ENCODE measurements at regions of chr1 and their contacts with region 1.

Region 1: DNA sequence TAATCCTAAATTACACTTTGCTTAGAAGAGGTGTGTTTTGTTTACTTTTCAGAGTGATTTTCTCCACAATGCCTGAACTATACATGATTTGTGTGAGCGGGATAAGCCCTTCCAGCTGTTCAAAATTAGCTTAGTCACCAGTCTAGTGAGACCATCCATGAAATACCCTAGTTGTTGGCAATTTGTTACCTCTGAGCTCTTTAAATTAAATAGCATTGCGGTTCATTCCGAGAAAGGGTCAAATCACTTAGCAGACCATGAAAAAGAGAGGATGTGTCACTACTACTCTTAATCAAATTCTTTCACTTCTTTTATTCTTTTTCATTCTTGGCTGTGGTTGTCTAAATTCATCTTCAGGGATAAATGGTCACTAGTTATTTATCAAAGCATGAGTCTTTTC is 11.9 kb upstream of the VAV3 start:
- DNase-seq: no peak
- ATAC-seq: no peak
- H3K4me3 Mint-ChIP-seq: no peak overlapping the region
- H3K27ac Mint-ChIP-seq: no peak overlapping the region
- H3K4me1 Mint-ChIP-seq: peaks cover 22% of the 10 kb centered on the region
- H3K27me3 Mint-ChIP-seq: no peaks in the 10 kb centered on the region
- CTCF ChIP-seq: no peak

Region 2: DNA sequence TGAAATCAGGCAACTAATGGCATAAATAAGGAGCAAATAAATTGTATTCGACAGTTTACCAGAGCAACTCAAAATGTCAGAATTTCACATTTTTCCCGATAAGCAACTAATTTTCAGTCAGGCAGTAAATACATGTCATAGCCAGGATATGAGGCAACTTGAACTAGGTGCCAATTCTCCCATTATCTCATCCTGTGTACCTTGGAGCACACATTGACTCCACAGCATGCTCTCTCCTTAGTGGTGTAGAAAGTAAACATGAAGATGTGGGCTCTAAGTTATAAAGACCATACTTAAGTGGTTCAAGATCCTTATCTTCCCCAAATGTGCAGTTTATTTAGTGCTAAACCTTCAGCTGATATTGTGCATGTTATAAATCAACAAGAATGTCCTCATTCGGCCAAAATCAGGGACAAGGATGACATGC is 209.7 kb before region 1 on chr1:
- CTCF ChIA-PET with region 1: no interaction called
- POLR2A ChIA-PET with region 1: no interaction called
- intact Hi-C with region 1: no loop called
- DNase-seq: no peak
- ATAC-seq: no peak
- H3K4me3 Mint-ChIP-seq: no peak overlapping the region
- H3K27ac Mint-ChIP-seq: no peak overlapping the region
- H3K4me1 Mint-ChIP-seq: no peaks in the 10 kb centered on the region
- H3K27me3 Mint-ChIP-seq: no peaks in the 10 kb centered on the region
- CTCF ChIP-seq: no peak

Region 3: DNA sequence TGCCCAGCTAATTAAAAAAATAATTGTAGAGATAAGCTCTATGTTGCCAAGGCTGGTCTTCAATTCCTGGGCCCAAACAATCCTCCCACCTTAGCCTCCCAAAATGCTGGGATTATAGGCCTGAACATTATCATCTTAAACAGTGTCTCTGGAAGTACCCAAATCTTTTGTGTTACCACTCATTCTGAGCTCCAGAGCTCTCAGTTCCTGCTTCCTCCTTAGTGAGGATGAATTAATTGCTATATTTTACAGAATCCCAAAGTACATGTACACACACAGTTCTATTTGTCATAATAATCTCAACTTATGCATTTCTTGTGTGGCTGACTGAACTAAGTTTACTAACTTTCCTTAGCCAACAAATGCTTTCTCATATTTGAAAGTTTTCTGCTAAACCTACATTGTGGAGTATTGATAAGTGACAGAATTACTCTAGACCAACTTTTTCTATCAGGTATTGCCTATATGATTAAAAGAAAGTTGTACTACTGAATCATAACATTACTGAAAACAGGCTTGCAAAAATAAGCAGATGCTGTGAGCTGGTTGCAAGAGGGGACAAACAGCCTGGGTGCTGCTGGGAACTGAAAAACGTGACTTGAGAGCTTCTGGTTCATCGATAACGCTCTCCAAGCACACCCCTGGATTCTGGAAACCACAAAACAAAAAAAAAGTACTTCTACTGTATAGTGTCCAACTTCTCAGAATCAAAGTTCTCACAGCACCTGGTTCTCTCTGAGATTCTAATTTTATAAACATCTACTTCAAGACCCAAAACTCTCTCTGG is 27.2 kb before region 1 on chr1:
- CTCF ChIA-PET with region 1: no interaction called
- POLR2A ChIA-PET with region 1: no interaction called
- intact Hi-C with region 1: no loop called
- DNase-seq: no peak
- ATAC-seq: peak; percentile 50
- H3K4me3 Mint-ChIP-seq: peak overlapping the region; percentile 19
- H3K27ac Mint-ChIP-seq: peak overlapping the region; percentile 11
- H3K4me1 Mint-ChIP-seq: peaks cover 75% of the 10 kb centered on the region
- H3K27me3 Mint-ChIP-seq: no peaks in the 10 kb centered on the region
- CTCF ChIP-seq: no peak

Region 4: DNA sequence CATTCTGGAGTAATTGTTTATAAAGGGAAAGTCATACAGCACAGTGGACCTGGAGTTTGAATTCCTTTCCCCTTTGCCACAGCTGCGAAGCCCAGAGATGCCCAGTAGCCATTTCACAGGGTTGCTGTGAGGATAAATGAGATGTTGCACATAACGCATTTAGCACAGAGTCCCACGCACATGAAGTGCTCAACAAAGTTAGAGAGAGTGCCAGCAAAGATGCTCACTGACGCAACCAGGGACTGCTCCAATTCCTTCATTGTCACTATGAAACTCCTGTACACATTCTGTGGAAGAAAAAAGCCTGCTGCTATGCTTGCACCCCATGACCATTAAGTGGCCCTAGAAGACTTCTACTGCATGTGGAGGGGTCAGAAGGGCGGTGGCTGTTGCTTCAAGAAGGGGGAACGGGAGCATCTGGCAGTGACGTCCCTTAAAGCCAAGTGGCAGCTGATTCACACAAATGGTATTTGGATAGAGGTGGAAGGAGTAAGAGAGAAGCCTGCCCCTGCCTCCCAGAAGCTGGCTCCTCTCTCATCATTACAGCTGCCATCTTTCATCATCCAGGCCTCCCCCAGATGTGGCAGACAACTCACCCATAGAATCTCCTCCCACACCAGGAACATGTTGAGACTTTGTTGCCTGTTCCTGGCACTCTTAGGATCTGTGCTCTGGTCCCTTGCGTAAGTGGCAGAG is 14.7 kb after region 1 on chr1:
- CTCF ChIA-PET with region 1: no interaction called
- POLR2A ChIA-PET with region 1: no interaction called
- intact Hi-C with region 1: loop called (anchors 2 kb)
- DNase-seq: no peak
- ATAC-seq: no peak
- H3K4me3 Mint-ChIP-seq: no peak overlapping the region
- H3K27ac Mint-ChIP-seq: no peak overlapping the region
- H3K4me1 Mint-ChIP-seq: no peaks in the 10 kb centered on the region
- H3K27me3 Mint-ChIP-seq: no peaks in the 10 kb centered on the region
- CTCF ChIP-seq: no peak

Region 5: DNA sequence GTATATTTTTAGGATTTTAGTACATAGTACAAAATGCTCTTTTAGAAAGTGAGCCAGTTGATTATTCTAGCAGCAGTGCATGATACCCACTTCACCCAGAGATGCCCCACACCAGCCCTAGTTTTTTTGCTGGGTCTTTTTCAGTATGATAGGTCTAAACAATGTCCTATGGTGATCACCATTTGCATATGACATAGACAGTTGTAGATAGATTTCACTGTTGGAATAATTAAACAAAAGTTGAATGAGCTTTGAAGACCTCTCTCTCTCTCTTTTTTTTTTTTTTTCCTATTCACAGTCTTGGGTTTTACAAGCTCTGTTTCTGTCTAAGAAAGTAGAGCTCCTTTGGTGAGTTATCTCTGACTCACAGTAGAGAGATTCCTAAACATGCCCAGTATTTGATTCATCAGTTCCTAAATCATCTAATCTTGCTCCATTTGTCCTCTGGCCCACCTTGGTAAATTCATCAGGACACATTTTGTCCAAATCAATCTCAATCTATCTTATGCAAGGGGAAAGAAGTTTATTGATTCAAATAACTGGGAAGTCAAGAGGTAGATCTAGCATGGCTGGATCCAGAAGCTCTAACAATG is 32.9 kb after region 1 on chr1:
- CTCF ChIA-PET with region 1: no interaction called
- POLR2A ChIA-PET with region 1: no interaction called
- intact Hi-C with region 1: loop called (anchors 5 kb)
- DNase-seq: no peak
- ATAC-seq: no peak
- H3K4me3 Mint-ChIP-seq: no peak overlapping the region
- H3K27ac Mint-ChIP-seq: no peak overlapping the region
- H3K4me1 Mint-ChIP-seq: peaks cover 39% of the 10 kb centered on the region
- H3K27me3 Mint-ChIP-seq: no peaks in the 10 kb centered on the region
- CTCF ChIP-seq: no peak

Region 6: GRCh38 chr1:108028841-108029388 is 52.1 kb after region 1 on chr1:
- CTCF ChIA-PET with region 1: no interaction called
- POLR2A ChIA-PET with region 1: no interaction called
- intact Hi-C with region 1: loop called (anchors 5 kb)
- DNase-seq: no peak
- ATAC-seq: no peak
- H3K4me3 Mint-ChIP-seq: no peak overlapping the region
- H3K27ac Mint-ChIP-seq: no peak overlapping the region
- H3K4me1 Mint-ChIP-seq: peaks cover 13% of the 10 kb centered on the region
- H3K27me3 Mint-ChIP-seq: no peaks in the 10 kb centered on the region
- CTCF ChIP-seq: no peak

Region 7: GRCh38 chr1:108089477-108089876 is 112.6 kb after region 1 on chr1:
- CTCF ChIA-PET with region 1: no interaction called
- POLR2A ChIA-PET with region 1: no interaction called
- intact Hi-C with region 1: no loop called
- DNase-seq: no peak
- ATAC-seq: no peak
- H3K4me3 Mint-ChIP-seq: no peak overlapping the region
- H3K27ac Mint-ChIP-seq: no peak overlapping the region
- H3K4me1 Mint-ChIP-seq: no peaks in the 10 kb centered on the region
- H3K27me3 Mint-ChIP-seq: no peaks in the 10 kb centered on the region
- CTCF ChIP-seq: no peak

Measured in activated B cell treated with CpG ODN at 0.5 μM for 24 hours (primary cell).